Heart right ventricle (tissue), 16 donors: ENCODE measurements at regions of chr12 and their contacts with region 1.

Region 1: DNA sequence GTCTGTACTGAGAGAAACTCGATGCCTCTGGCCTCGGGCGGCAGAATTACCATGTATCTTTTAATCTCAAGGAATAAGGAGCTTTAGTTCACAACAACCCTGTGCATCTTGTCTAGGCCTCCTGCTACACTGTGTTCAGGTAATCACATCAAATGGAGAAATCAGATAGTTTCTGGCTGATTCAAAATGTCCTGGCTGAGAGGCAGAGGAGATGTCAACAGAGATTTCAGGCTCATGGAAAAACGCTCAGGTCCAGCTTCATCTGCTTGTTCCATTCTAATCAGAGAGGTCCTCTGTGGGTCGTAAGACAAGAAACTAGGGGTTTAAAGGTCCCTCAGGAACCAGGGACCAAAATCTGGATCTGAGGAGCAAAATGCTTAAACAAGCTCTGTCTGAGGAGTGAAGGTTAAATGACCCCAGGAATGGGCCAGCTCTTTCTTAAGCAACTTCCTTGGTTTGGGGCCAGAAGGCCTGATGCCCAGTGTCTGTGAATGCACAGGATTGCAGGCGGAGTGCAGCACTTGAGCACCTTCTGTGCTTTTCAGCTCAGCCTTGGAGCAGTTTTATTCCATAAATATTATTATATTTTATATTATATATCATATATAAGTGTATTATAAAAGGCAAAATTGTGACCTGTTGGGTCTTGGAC is 170.2 kb upstream of the PRICKLE1 start:
- DNase-seq: peak; percentile 66 to 67
- ATAC-seq: peak in 7 of 8 donors; percentile 75 to 95 (median 85)
- H3K4me3 ChIP-seq: no peak overlapping the region
- H3K27ac ChIP-seq: peak overlapping the region in 2 of 10 donors; percentile 29 to 36
- H3K4me1 ChIP-seq: peaks cover 3 to 28% (median 13%) of the 10 kb centered on the region in 9 donors
- H3K27me3 ChIP-seq: no peaks in the 10 kb centered on the region
- CTCF ChIP-seq: no peak

Region 2: DNA sequence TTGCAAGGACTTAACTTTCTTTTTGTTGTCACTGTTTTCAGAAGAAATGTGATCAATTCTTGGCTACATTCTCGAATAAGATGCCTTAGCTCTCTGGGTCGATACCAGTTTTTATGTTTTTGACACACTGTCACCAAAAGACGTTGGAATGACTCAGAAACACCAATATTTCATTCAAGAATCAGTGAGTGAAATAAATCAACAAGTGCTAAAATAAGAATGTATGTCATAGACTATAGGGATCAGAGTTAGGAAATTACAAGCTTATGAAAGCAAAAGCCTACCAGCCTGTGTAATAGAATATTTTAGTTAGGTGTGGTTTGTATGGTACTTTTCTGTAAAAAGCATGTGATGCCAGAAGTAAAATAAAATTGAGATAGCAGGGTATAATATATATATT is 416.0 kb before region 1 on chr12:
- intact Hi-C with region 1: no loop called
- DNase-seq: no peak
- ATAC-seq: no peak
- H3K4me3 ChIP-seq: no peak overlapping the region
- H3K27ac ChIP-seq: no peak overlapping the region
- H3K4me1 ChIP-seq: no peaks in the 10 kb centered on the region
- H3K27me3 ChIP-seq: no peaks in the 10 kb centered on the region
- CTCF ChIP-seq: no peak

Region 3: DNA sequence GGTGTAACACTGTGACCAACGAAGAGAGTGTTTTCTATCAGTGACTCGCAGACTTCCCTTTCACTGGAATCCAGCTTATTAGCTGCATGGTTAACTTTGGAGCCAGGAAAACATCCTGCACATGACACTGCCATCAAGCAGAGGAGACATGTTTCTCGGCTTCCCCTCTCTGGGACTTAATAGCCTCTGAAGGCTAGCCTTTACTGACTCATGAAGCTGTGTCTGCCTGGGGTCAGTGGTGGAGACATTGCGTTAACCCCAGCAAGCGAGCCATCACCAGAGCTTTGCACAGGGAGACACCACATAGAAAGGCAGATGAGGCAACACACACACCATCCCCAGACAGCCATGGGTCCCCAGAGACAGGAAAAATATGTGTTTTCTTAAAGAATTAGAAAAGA is 43.3 kb before region 1 on chr12:
- intact Hi-C with region 1: no loop called
- DNase-seq: no peak
- ATAC-seq: peak in 6 of 8 donors; percentile 22 to 90 (median 52)
- H3K4me3 ChIP-seq: no peak overlapping the region
- H3K27ac ChIP-seq: peak overlapping the region in 4 of 10 donors; percentile 16 to 43 (median 26)
- H3K4me1 ChIP-seq: peaks cover 0 to 5% (median 0%) of the 10 kb centered on the region in 9 donors
- H3K27me3 ChIP-seq: no peaks in the 10 kb centered on the region
- CTCF ChIP-seq: no peak

Region 4: DNA sequence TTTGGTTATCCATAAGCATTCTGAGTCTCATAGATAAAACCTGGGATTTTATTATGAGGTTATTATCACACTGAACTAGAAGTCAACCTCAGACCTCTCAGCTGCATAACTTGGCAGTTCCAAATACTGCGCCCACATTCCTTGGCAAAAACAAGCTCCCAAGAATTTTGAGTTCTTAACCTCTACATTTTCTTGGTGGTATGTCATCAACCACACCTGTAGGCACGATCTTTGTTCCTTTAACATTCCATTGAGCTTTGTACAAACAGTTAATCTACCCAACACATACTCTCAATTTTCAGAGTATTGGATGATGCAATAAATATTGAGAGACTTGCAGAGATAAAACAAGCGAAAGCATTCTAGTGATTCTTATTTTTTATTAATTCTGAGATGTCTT is 201.6 kb after region 1 on chr12:
- intact Hi-C with region 1: loop called in 1 of 10 experiments (anchors 10 kb)
- DNase-seq: no peak
- ATAC-seq: peak in 1 of 8 donors; percentile 30
- H3K4me3 ChIP-seq: no peak overlapping the region
- H3K27ac ChIP-seq: no peak overlapping the region
- H3K4me1 ChIP-seq: peaks cover 0 to 43% (median 8%) of the 10 kb centered on the region in 9 donors
- H3K27me3 ChIP-seq: no peaks in the 10 kb centered on the region
- CTCF ChIP-seq: no peak